Posterior vena cava (tissue), 2 donors: ENCODE measurements at regions of chr15 and their contacts with region 1.

Region 1: GRCh38 chr15:27408428-27408827 is 437.4 kb downstream of the GABRG3 start:
- DNase-seq: no peak

Region 2: GRCh38 chr15:27448986-27449385 is 40.6 kb after region 1 on chr15:
- intact Hi-C with region 1: no loop called
- DNase-seq: no peak

Region 3: DNA sequence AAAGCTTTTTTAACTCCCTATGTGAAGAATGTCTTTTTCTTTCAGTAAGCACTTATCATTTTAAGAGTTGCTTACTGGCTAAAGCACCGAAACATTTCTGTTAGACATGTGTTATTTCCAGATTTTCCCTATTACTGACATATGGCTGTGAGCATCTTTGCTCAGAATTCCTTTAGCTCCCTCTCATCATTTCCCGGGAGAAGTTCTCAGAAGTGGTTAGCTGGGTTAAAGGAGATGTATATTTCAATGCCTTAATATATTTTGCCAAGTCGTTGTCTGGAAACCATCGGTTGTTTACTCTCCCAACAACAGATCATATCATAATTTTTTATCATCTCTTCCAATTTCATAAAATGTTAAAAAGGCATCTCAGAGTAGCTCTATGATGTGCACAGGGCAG is 294.2 kb after region 1 on chr15:
- intact Hi-C with region 1: loop called in 1 of 2 experiments (anchors 5 kb)
- DNase-seq: no peak